Activated B cell treated with CpG ODN at 0.5 μM for 24 hours (primary cell): ENCODE measurements at regions of chr9 and their contacts with region 1.

Region 1: GRCh38 chr9:37220971-37221370 is 100.6 kb downstream of the ZCCHC7 start:
- DNase-seq: no peak
- ATAC-seq: no peak
- H3K4me3 Mint-ChIP-seq: no peak overlapping the region
- H3K27ac Mint-ChIP-seq: peak overlapping the region; percentile 42
- H3K4me1 Mint-ChIP-seq: peaks cover 65% of the 10 kb centered on the region
- H3K27me3 Mint-ChIP-seq: no peaks in the 10 kb centered on the region
- CTCF ChIP-seq: no peak

Region 2: GRCh38 chr9:37038302-37038942 is 182.5 kb before region 1 on chr9:
- CTCF ChIA-PET with region 1: no interaction called
- POLR2A ChIA-PET with region 1: no interaction called
- intact Hi-C with region 1: no loop called
- DNase-seq: no peak
- ATAC-seq: no peak
- H3K4me3 Mint-ChIP-seq: peak overlapping the region; percentile 90
- H3K27ac Mint-ChIP-seq: peak overlapping the region; percentile 96
- H3K4me1 Mint-ChIP-seq: peaks cover 57% of the 10 kb centered on the region
- H3K27me3 Mint-ChIP-seq: no peaks in the 10 kb centered on the region
- CTCF ChIP-seq: no peak

Region 3: GRCh38 chr9:37174247-37174646 is 46.7 kb before region 1 on chr9:
- CTCF ChIA-PET with region 1: no interaction called
- POLR2A ChIA-PET with region 1: no interaction called
- intact Hi-C with region 1: no loop called
- DNase-seq: no peak
- ATAC-seq: no peak
- H3K4me3 Mint-ChIP-seq: no peak overlapping the region
- H3K27ac Mint-ChIP-seq: peak overlapping the region; percentile 9
- H3K4me1 Mint-ChIP-seq: peaks cover 42% of the 10 kb centered on the region
- H3K27me3 Mint-ChIP-seq: no peaks in the 10 kb centered on the region
- CTCF ChIP-seq: no peak

Region 4: DNA sequence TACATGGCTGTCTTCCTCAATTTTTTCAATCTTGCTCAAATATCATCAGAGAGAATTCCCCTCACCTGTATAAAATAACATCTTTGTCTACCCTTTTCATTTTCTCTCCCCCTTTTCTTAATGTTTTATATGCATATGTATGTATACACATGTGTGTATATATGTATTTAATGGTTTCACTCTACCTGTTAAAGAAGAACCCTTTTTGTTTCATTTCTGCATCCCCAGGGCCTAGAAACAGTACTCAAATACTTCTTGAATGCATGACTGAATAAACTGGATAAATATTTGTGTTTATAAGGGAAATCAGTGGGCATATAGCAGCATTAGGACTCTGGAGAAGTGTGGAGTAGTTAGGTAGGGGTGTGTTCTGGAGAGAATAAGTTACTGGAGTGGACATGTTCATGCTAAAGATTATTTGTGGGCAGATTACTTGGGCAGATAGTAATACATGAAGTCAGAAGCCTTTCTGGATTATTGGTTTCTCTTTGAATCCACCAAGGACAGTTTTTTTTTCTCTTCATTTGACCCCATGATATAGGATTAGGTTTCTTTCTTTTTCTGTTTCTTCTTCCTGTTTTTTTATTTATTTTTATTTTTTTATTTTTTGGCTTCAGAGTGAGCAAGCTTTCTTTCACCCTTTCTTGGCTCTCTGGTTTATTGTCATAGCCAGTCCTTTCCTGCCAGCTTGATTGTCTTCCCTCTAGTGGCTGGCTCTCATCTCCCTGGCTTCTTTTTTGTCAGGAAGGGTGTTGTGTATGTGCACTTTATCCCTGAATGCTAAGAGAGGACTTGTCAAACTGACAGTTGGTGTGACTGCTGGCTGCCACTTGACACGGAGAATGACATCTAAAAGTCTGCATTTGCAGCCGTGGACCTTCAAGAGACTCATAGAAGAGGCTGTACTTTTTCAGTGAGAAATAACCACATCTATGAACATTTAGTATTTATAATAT is 11.3 kb before region 1 on chr9:
- CTCF ChIA-PET with region 1: interaction called, 3 read pairs
- POLR2A ChIA-PET with region 1: no interaction called
- intact Hi-C with region 1: loop called (anchors 1 kb)
- DNase-seq: no peak
- ATAC-seq: peak; percentile 35
- H3K4me3 Mint-ChIP-seq: peak overlapping the region; percentile 63
- H3K27ac Mint-ChIP-seq: peak overlapping the region; percentile 88
- H3K4me1 Mint-ChIP-seq: peaks cover 81% of the 10 kb centered on the region
- H3K27me3 Mint-ChIP-seq: no peaks in the 10 kb centered on the region
- CTCF ChIP-seq: no peak

Region 5: DNA sequence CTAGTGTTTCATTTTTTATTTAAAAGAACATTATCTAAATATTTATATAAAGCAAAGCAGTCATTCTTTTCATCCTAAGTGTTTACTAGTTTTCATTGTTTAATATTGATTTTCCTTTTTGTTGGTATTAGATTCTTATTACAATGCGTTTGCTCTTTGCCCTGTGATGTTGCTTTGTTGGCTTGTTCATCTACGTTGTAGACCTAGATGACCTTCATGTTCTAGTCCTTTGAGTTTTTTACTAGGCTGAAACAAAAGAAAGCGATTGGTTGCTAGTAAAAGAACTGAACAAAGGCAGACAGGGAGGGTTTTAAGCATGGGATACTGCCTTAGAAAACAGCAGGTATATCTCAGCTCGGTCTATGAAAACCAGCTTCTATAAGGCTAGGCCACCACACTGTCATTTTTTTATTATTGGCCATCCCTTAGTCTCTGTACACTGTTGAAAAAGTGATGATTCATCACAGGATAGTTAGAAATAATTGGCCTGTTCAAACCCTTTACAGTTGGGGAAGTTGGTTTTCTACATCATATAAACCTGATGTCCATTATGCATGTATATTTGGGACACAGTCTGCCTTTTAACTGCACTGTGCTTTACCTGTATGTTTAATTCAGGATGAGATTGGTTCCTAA is 18.4 kb after region 1 on chr9:
- CTCF ChIA-PET with region 1: no interaction called
- POLR2A ChIA-PET with region 1: interaction called, 3 read pairs
- intact Hi-C with region 1: loop called (anchors 2 kb)
- DNase-seq: no peak
- ATAC-seq: no peak
- H3K4me3 Mint-ChIP-seq: no peak overlapping the region
- H3K27ac Mint-ChIP-seq: no peak overlapping the region
- H3K4me1 Mint-ChIP-seq: peaks cover 65% of the 10 kb centered on the region
- H3K27me3 Mint-ChIP-seq: no peaks in the 10 kb centered on the region
- CTCF ChIP-seq: no peak

Region 6: DNA sequence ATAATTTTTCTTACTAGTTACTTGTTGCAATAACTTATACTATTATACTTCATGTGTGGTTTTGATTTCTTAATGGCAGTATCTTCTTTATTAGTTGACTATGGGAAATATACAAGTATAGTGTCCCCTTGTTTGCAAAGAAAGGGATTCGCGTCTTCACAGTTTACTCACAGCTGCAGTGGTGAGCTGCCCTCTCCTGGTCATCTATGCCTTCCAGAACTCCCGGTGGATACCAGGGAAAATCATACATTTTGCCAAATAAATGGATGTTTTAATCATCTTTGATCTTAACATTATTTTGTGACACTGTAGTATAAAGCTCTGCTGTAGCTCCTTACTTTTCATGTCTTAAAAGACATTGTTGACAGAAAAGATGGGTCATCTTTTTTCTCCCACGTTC is 41.4 kb after region 1 on chr9:
- CTCF ChIA-PET with region 1: no interaction called
- POLR2A ChIA-PET with region 1: no interaction called
- intact Hi-C with region 1: loop called (anchors 5 kb)
- DNase-seq: no peak
- ATAC-seq: no peak
- H3K4me3 Mint-ChIP-seq: no peak overlapping the region
- H3K27ac Mint-ChIP-seq: peak overlapping the region; percentile 72
- H3K4me1 Mint-ChIP-seq: peaks cover 75% of the 10 kb centered on the region
- H3K27me3 Mint-ChIP-seq: no peaks in the 10 kb centered on the region
- CTCF ChIP-seq: no peak

Region 7: DNA sequence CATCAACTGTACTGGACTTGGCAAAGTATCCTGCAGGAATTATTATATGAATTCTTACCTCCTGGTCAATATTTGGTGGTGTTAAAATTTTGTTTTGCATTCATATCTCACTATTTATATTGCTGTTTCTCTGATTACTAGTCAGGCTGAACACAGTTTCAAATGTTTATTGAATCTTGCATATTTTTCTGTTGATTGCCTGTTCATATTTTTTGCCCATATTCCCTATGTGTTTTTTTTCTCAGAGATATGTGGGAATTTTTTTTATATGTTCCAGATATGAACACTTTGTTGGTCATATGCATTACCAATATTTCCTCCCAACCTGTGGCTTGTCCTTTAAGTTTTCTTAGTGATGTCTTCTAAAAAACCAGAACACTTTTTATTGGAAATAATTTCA is 52.6 kb after region 1 on chr9:
- CTCF ChIA-PET with region 1: no interaction called
- POLR2A ChIA-PET with region 1: no interaction called
- intact Hi-C with region 1: no loop called
- DNase-seq: no peak
- ATAC-seq: no peak
- H3K4me3 Mint-ChIP-seq: no peak overlapping the region
- H3K27ac Mint-ChIP-seq: peak overlapping the region; percentile 24
- H3K4me1 Mint-ChIP-seq: peaks cover 58% of the 10 kb centered on the region
- H3K27me3 Mint-ChIP-seq: no peaks in the 10 kb centered on the region
- CTCF ChIP-seq: no peak